Heart left ventricle (tissue), 16 donors: ENCODE measurements at regions of chr10 and their contacts with region 1.

Region 1: GRCh38 chr10:55500932-55501559 is 700.0 kb upstream of the PCDH15 start:
- DNase-seq: peak in 1 of 5 donors; percentile 17
- ATAC-seq: no peak
- H3K4me3 ChIP-seq: no peak overlapping the region
- H3K27ac ChIP-seq: no peak overlapping the region
- H3K4me1 ChIP-seq: no peaks in the 10 kb centered on the region
- H3K27me3 ChIP-seq: no peaks in the 10 kb centered on the region
- CTCF ChIP-seq: peak; percentile 36 to 70 (median 57)
- POLR2A ChIP-seq: no peak

Region 2: GRCh38 chr10:55183993-55184392 is 317.1 kb before region 1 on chr10:
- intact Hi-C with region 1: loop called in 1 of 10 experiments (anchors 10 kb)
- DNase-seq: no peak
- ATAC-seq: no peak
- H3K4me3 ChIP-seq: no peak overlapping the region
- H3K27ac ChIP-seq: no peak overlapping the region
- H3K4me1 ChIP-seq: no peaks in the 10 kb centered on the region
- H3K27me3 ChIP-seq: no peaks in the 10 kb centered on the region
- CTCF ChIP-seq: no peak
- POLR2A ChIP-seq: no peak

Region 3: GRCh38 chr10:55287346-55287745 is 213.7 kb before region 1 on chr10:
- intact Hi-C with region 1: loop called in 3 of 10 experiments (anchors 5 to 10 kb)
- DNase-seq: no peak
- ATAC-seq: no peak
- H3K4me3 ChIP-seq: no peak overlapping the region
- H3K27ac ChIP-seq: no peak overlapping the region
- H3K4me1 ChIP-seq: no peaks in the 10 kb centered on the region
- H3K27me3 ChIP-seq: no peaks in the 10 kb centered on the region
- CTCF ChIP-seq: peak in 6 of 12 donors; percentile 7 to 39 (median 18)
- POLR2A ChIP-seq: no peak